ENCODE measurements at regions of chr12 and their contacts with region 1.

Region 1: DNA sequence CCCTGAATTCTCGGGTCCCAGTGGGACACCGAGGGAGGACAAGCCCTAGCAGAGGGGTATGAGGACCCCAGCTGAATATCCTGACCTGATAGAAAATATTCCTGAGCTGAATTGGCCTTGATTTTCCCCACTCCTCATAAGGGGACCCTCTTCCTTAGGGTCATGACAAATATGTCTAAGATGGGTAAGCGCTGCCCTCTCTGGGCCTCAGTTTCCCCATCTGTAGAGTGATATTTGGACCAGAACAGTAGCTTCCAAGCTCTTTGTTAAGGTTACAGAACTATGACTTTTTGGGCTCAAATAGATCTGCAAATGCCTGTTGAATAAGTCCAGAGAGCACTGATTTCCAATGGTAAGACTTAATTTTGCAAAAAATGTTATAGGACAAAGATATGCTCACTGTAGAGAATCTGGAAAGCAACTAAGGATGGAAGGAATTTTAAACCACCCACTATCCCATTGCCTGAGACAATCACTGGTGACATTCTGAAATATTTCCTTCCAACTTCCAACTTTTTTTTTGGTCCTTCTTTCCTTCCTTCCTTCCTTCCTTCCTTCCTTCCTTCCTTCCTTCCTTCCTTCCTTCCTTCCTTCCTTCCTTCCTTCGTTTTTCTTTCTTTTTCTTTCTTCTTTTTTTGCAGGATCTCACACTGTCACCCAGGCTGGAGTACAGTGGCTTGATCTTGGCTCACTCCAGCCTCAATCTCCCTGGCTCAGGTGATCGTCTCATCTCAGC is 32.0 kb downstream of the MYL2 start:
- DNase-seq: no peak
- H3K4me3 ChIP-seq: no peak overlapping the region
- H3K27ac ChIP-seq: no peak overlapping the region
- H3K4me1 ChIP-seq: no peaks in the 10 kb centered on the region
- H3K27me3 ChIP-seq: no peaks in the 10 kb centered on the region
- CTCF ChIP-seq: no peak

Region 2: DNA sequence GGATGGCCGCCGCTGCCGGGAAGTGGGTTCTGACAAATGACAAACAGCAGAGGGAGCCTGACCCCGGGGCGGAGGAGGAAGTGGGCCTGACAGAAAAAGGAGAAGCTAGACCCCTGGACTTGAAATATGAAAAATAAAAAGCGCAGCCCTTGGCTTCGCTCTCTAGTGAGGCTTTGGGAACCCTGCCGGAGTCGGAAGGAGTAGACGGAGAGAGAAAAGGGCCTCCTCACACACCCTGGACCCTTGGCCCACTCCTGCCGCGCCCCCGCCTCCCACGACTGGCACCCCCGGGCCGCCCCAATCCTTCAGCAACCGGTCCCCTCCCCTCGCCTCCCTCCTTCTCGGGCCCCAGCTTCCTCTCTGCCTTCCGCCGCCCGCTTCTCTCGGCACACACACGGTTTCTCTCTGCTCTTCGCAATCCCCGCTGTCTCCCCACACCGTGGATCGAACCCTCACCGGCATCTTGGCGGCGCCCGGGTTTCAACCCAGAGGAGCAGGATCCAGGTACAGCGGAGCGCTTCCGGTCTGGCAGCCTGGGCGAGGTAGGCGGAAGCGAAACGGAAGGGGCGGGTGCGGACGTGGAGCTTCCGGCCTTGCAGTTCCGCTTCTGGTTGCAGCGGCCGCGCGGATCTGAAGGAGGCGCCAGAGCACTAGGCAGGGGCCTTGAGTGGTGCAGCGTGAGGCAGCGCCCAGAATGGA is 438.5 kb before region 1 on chr12 and contains the start of gene ARPC3:
- intact Hi-C with region 1: loop called (anchors 5 kb)
- DNase-seq: peak; percentile 76 to 98
- H3K4me3 ChIP-seq: peak within 1 kb of the TSS; percentile 92 to 96
- H3K27ac ChIP-seq: peak within 1 kb of the TSS; percentile 92 to 98
- H3K4me1 ChIP-seq: peaks cover 4 to 17% of the 10 kb centered on the region in 2 donors
- H3K27me3 ChIP-seq: no peaks in the 10 kb centered on the region
- CTCF ChIP-seq: peak; percentile 90 to 95 (median 92)
- total RNA-seq, gene ARPC3: 76.5 TPM

Region 3: DNA sequence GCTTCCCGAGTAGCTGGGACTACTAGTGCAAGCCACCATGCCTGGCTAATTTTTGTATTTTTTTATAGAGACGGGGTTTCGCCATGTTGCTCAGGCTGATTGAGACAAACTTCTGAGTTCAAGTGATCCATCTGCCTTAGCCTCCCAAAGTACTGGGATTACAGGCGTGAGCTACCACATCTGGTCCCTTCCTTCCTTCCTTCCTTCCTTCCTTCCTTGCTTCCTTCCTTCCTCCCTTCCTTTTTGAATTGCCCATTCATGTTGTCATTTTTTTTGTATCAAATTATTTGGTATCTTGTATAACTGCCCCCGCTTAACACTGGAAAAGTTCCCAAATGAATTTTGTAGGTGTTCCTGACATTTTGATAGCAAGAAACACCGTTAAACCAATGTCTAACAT is 374.6 kb before region 1 on chr12:
- intact Hi-C with region 1: loop called (anchors 5 kb)
- DNase-seq: no peak
- H3K4me3 ChIP-seq: no peak overlapping the region
- H3K27ac ChIP-seq: no peak overlapping the region
- H3K4me1 ChIP-seq: peaks cover 0 to 3% of the 10 kb centered on the region in 2 donors
- H3K27me3 ChIP-seq: no peaks in the 10 kb centered on the region
- CTCF ChIP-seq: no peak

Region 4: GRCh38 chr12:110689281-110690126 is 198.9 kb before region 1 on chr12:
- intact Hi-C with region 1: loop called (anchors 10 kb)
- DNase-seq: peak in 1 of 2 donors; percentile 71
- H3K4me3 ChIP-seq: peak overlapping the region; percentile 73 to 87
- H3K27ac ChIP-seq: peak overlapping the region; percentile 66
- H3K4me1 ChIP-seq: peaks cover 0 to 12% of the 10 kb centered on the region in 2 donors
- H3K27me3 ChIP-seq: no peaks in the 10 kb centered on the region
- CTCF ChIP-seq: no peak

Region 5: GRCh38 chr12:110846615-110847566 is 41.5 kb before region 1 on chr12 and contains the start of gene CCDC63:
- intact Hi-C with region 1: loop called (anchors 5 kb)
- DNase-seq: peak in 1 of 2 donors; percentile 75
- H3K4me3 ChIP-seq: peak within 1 kb of the TSS; percentile 49 to 59
- H3K27ac ChIP-seq: no peak within 1 kb of the TSS
- H3K4me1 ChIP-seq: peaks cover 0 to 6% of the 10 kb centered on the region in 2 donors
- H3K27me3 ChIP-seq: no peaks in the 10 kb centered on the region
- CTCF ChIP-seq: peak; percentile 31 to 78 (median 45)
- total RNA-seq, gene CCDC63: not detected

Region 6: GRCh38 chr12:110932046-110932445 is 43.6 kb after region 1 on chr12:
- intact Hi-C with region 1: no loop called
- DNase-seq: no peak
- H3K4me3 ChIP-seq: no peak overlapping the region
- H3K27ac ChIP-seq: no peak overlapping the region
- H3K4me1 ChIP-seq: no peaks in the 10 kb centered on the region
- H3K27me3 ChIP-seq: peaks cover 6% of the 10 kb centered on the region
- CTCF ChIP-seq: no peak

Measured in ascending aorta (tissue), 2 donors.